ENCODE measurements at regions of chr19 and their contacts with region 1.

Region 1: GRCh38 chr19:48513289-48514122 is 1.9 kb upstream of the LMTK3 start:
- DNase-seq: peak; percentile 85 to 87
- H3K4me3 ChIP-seq: peak overlapping the region; percentile 83
- H3K4me3 Mint-ChIP-seq: no peak overlapping the region
- H3K27ac Mint-ChIP-seq: peak overlapping the region; percentile 60
- H3K4me1 ChIP-seq: peaks cover 18% of the 10 kb centered on the region
- H3K4me1 Mint-ChIP-seq: peaks cover 35% of the 10 kb centered on the region
- H3K27me3 ChIP-seq: no peaks in the 10 kb centered on the region
- H3K27me3 Mint-ChIP-seq: no peaks in the 10 kb centered on the region
- CTCF ChIP-seq: no peak

Region 2: DNA sequence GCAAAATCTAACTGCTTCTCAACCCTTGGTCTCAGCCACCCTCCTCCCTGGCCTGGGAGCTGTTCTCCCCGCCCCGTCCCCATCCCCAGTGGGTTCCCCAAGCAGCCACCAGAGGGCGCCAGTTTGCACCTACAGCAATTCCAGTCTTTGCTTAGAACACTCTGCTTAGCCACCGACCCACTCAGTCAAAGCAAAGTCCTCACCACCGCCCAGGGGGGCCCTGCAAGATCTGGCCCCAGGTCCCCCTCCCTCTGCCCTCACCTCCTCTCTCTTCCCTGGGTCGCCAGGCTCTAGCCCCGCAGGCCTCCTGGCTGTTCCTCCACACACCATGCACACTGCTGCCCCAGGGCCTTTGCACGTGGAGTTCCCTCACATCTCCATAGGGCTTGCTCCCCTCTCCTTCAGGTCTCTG is 162.2 kb before region 1 on chr19:
- CTCF ChIA-PET with region 1: no interaction called
- POLR2A ChIA-PET with region 1: no interaction called
- intact Hi-C with region 1: no loop called
- DNase-seq: peak; percentile 81 to 85
- H3K4me3 ChIP-seq: no peak overlapping the region
- H3K4me3 Mint-ChIP-seq: no peak overlapping the region
- H3K27ac Mint-ChIP-seq: peak overlapping the region; percentile 43
- H3K4me1 ChIP-seq: peaks cover 33% of the 10 kb centered on the region
- H3K4me1 Mint-ChIP-seq: peaks cover 39% of the 10 kb centered on the region
- H3K27me3 ChIP-seq: no peaks in the 10 kb centered on the region
- H3K27me3 Mint-ChIP-seq: no peaks in the 10 kb centered on the region
- CTCF ChIP-seq: peak; percentile 82 to 90

Region 3: DNA sequence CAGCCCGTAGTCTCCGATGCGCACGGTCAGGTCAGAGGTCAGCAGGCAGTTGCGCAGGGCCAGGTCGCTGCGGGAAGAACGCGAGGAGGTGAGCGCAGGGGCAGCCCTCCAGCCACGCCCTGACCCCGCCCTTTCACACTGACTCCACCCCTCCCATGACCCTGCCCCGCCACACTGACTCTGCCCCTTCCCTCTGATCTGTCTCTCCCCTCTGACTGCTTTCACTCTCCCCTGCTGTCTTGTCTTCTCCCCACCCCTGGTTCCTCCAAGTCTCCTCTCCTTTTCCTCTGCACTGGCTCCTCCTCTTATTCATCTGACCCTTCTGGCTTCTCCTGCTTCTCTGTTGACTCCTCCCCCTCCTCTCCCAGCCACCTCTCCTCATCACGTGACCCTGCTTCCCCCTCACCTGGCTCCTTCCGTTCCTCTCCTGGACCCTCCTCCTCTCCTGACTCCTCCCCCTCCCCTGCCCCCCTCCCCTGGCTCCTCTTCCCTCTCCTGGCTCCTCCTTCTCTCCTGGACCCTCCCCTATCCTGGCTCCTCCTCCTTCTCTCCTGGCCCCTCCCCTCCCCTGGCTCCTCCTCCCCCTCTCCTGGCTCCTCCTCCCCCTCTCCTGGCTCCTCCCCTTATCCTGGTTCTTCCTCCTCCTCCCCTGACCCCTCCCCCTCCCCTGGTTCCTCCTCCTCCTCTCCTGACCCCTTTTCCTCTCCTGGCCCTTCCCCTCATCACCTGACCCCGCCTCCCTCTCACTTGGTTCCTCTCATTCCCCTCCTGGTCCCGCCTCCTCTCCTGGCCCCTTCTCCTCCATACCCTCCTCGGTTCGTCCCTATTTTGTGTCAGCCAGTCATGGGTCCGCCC is 11.8 kb before region 1 on chr19:
- CTCF ChIA-PET with region 1: interaction called, 4 read pairs
- POLR2A ChIA-PET with region 1: no interaction called
- intact Hi-C with region 1: loop called (anchors 1 kb)
- DNase-seq: peak; percentile 99 to 100
- H3K4me3 ChIP-seq: peak overlapping the region; percentile 57
- H3K4me3 Mint-ChIP-seq: peak overlapping the region; percentile 80
- H3K27ac Mint-ChIP-seq: peak overlapping the region; percentile 87
- H3K4me1 ChIP-seq: peaks cover 15% of the 10 kb centered on the region
- H3K4me1 Mint-ChIP-seq: peaks cover 22% of the 10 kb centered on the region
- H3K27me3 ChIP-seq: no peaks in the 10 kb centered on the region
- H3K27me3 Mint-ChIP-seq: no peaks in the 10 kb centered on the region
- CTCF ChIP-seq: no peak

Region 4: DNA sequence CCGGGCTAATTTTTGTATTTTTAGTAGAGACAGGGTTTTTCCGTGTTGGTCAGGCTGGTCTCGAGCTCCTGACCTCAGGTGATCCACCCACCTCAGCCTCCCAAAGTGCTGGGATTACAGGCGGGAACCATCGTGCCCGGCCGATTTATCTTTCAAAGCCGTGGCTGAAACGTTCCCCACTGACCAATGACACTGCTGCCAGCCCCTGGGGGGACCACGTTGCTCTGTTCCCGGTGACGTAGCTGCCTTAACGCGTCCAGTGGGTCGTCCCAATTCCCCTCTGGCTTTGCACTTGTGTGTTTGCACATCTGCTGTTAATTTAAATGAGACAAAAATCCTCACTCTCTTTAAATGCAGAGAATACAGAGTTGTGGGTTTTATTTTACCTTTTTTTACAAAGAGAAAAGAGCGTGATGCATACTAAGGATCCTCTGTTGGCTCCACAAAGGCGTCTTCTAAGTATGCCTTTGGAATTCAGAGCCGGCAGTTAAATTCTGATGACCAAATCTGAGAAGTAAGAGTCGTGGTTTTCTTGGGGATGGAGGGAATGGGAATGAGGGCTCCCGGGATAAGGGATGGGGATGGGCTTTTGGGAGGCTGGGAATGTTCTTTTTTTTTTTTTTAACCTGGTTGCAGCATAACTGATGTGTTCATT is 16.7 kb after region 1 on chr19:
- CTCF ChIA-PET with region 1: no interaction called
- POLR2A ChIA-PET with region 1: interaction called, 12 read pairs
- intact Hi-C with region 1: no loop called
- DNase-seq: no peak
- H3K4me3 ChIP-seq: no peak overlapping the region
- H3K4me3 Mint-ChIP-seq: no peak overlapping the region
- H3K27ac Mint-ChIP-seq: peak overlapping the region; percentile 14
- H3K4me1 ChIP-seq: no peaks in the 10 kb centered on the region
- H3K4me1 Mint-ChIP-seq: peaks cover 11% of the 10 kb centered on the region
- H3K27me3 ChIP-seq: no peaks in the 10 kb centered on the region
- H3K27me3 Mint-ChIP-seq: no peaks in the 10 kb centered on the region
- CTCF ChIP-seq: no peak

Region 5: GRCh38 chr19:48568345-48568886 is 54.9 kb after region 1 on chr19:
- CTCF ChIA-PET with region 1: no interaction called
- POLR2A ChIA-PET with region 1: no interaction called
- intact Hi-C with region 1: no loop called
- DNase-seq: no peak
- H3K4me3 ChIP-seq: no peak overlapping the region
- H3K4me3 Mint-ChIP-seq: no peak overlapping the region
- H3K27ac Mint-ChIP-seq: peak overlapping the region; percentile 81
- H3K4me1 ChIP-seq: peaks cover 44% of the 10 kb centered on the region
- H3K4me1 Mint-ChIP-seq: peaks cover 33% of the 10 kb centered on the region
- H3K27me3 ChIP-seq: no peaks in the 10 kb centered on the region
- H3K27me3 Mint-ChIP-seq: no peaks in the 10 kb centered on the region
- CTCF ChIP-seq: no peak

Region 6: DNA sequence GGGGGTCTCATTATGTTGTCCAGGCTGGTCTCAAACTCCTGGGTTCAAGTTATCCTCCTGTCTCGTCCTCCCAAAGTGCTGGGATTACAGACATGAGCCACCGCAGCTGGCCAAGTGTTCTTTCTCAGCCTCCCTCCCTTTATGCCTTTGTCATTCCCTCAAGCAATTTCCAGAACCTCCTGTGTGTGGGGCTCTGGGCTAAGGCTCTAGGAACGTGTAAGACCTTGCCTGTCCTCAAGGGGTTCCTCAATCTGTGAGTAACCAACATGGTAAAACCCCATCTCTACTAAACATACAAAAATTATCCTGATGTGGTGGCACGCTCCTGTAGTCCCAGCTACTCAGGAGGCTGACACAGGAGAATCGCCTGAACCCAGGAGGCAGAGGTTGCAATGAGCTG is 77.5 kb after region 1 on chr19:
- CTCF ChIA-PET with region 1: no interaction called
- POLR2A ChIA-PET with region 1: no interaction called
- intact Hi-C with region 1: no loop called
- DNase-seq: no peak
- H3K4me3 ChIP-seq: no peak overlapping the region
- H3K4me3 Mint-ChIP-seq: no peak overlapping the region
- H3K27ac Mint-ChIP-seq: no peak overlapping the region
- H3K4me1 ChIP-seq: no peaks in the 10 kb centered on the region; the same call in 1 of the 2 replicates
- H3K4me1 Mint-ChIP-seq: peaks cover 7% of the 10 kb centered on the region
- H3K27me3 ChIP-seq: no peaks in the 10 kb centered on the region
- H3K27me3 Mint-ChIP-seq: no peaks in the 10 kb centered on the region
- CTCF ChIP-seq: peak; percentile 8 to 11